ENCODE measurements at regions of chr12 and their contacts with region 1.

Region 1: GRCh38 chr12:11486623-11487444 is 91.5 kb upstream of the PRB2 start:
- DNase-seq: peak; percentile 60 to 92 (median 74)
- ATAC-seq: peak; percentile 98
- H3K4me3 ChIP-seq: no peak overlapping the region
- H3K4me3 Mint-ChIP-seq: no peak overlapping the region
- H3K27ac ChIP-seq: no peak overlapping the region
- H3K27ac Mint-ChIP-seq: no peak overlapping the region
- H3K4me1 ChIP-seq: peaks cover 4% of the 10 kb centered on the region
- H3K4me1 Mint-ChIP-seq: peaks cover 5% of the 10 kb centered on the region
- H3K27me3 ChIP-seq: no peaks in the 10 kb centered on the region
- H3K27me3 Mint-ChIP-seq: no peaks in the 10 kb centered on the region
- CTCF ChIP-seq: peak; percentile 100

Region 2: GRCh38 chr12:10153271-10154144 is 1333.3 kb before region 1 on chr12:
- CTCF ChIA-PET with region 1: interaction called, 3 read pairs
- POLR2A ChIA-PET with region 1: no interaction called
- intact Hi-C with region 1: loop called (anchors 5 to 10 kb)
- DNase-seq: peak; percentile 22 to 79 (median 41)
- ATAC-seq: peak; percentile 78
- H3K4me3 ChIP-seq: peak overlapping the region; percentile 63
- H3K4me3 Mint-ChIP-seq: peak overlapping the region; percentile 95
- H3K27ac ChIP-seq: no peak overlapping the region
- H3K27ac Mint-ChIP-seq: peak overlapping the region; percentile 54
- H3K4me1 ChIP-seq: peaks cover 13% of the 10 kb centered on the region
- H3K4me1 Mint-ChIP-seq: peaks cover 9% of the 10 kb centered on the region
- H3K27me3 ChIP-seq: peaks cover 0 to 2% of the 10 kb centered on the region in 2 experiments
- H3K27me3 Mint-ChIP-seq: peaks cover 19% of the 10 kb centered on the region
- CTCF ChIP-seq: peak; percentile 93

Region 3: GRCh38 chr12:10364815-10365622 is 1121.8 kb before region 1 on chr12:
- CTCF ChIA-PET with region 1: no interaction called
- POLR2A ChIA-PET with region 1: no interaction called
- intact Hi-C with region 1: loop called in 1 of 2 experiments (anchors 10 kb)
- DNase-seq: peak; percentile 23 to 87 (median 48)
- ATAC-seq: peak; percentile 81
- H3K4me3 ChIP-seq: peak overlapping the region; percentile 73
- H3K4me3 Mint-ChIP-seq: no peak overlapping the region
- H3K27ac ChIP-seq: peak overlapping the region; percentile 52 to 77
- H3K27ac Mint-ChIP-seq: no peak overlapping the region
- H3K4me1 ChIP-seq: peaks cover 18% of the 10 kb centered on the region
- H3K4me1 Mint-ChIP-seq: peaks cover 12% of the 10 kb centered on the region
- H3K27me3 ChIP-seq: no peaks in the 10 kb centered on the region
- H3K27me3 Mint-ChIP-seq: no peaks in the 10 kb centered on the region
- CTCF ChIP-seq: no peak

Region 4: GRCh38 chr12:10771132-10771733 is 715.6 kb before region 1 on chr12:
- CTCF ChIA-PET with region 1: interaction called, 24 read pairs
- POLR2A ChIA-PET with region 1: interaction called, 6 read pairs
- intact Hi-C with region 1: loop called (anchors 1 kb)
- DNase-seq: peak in 3 of 14 experiments; percentile 61 to 69 (median 65)
- ATAC-seq: peak; percentile 76
- H3K4me3 ChIP-seq: no peak overlapping the region
- H3K4me3 Mint-ChIP-seq: no peak overlapping the region
- H3K27ac ChIP-seq: no peak overlapping the region
- H3K27ac Mint-ChIP-seq: no peak overlapping the region
- H3K4me1 ChIP-seq: no peaks in the 10 kb centered on the region
- H3K4me1 Mint-ChIP-seq: no peaks in the 10 kb centered on the region
- H3K27me3 ChIP-seq: peaks cover 0 to 32% of the 10 kb centered on the region in 2 experiments
- H3K27me3 Mint-ChIP-seq: peaks cover 46% of the 10 kb centered on the region
- CTCF ChIP-seq: peak; percentile 75

Region 5: GRCh38 chr12:11209108-11209507 is 277.7 kb before region 1 on chr12:
- CTCF ChIA-PET with region 1: no interaction called
- POLR2A ChIA-PET with region 1: no interaction called
- intact Hi-C with region 1: loop called in 1 of 2 experiments (anchors 10 kb)
- DNase-seq: no peak
- ATAC-seq: no peak
- H3K4me3 ChIP-seq: no peak overlapping the region
- H3K4me3 Mint-ChIP-seq: no peak overlapping the region
- H3K27ac ChIP-seq: no peak overlapping the region
- H3K27ac Mint-ChIP-seq: no peak overlapping the region
- H3K4me1 ChIP-seq: no peaks in the 10 kb centered on the region
- H3K4me1 Mint-ChIP-seq: no peaks in the 10 kb centered on the region
- H3K27me3 ChIP-seq: no peaks in the 10 kb centered on the region
- H3K27me3 Mint-ChIP-seq: no peaks in the 10 kb centered on the region
- CTCF ChIP-seq: no peak

Measured in CD4-positive, alpha-beta T cell (primary cell).